IMR-90 (cell line): ENCODE measurements at regions of chr14 and their contacts with region 1.

Region 1: GRCh38 chr14:93115069-93115820 is 480 bp downstream of the ITPK1 start:
- DNase-seq: peak; percentile 78
- ATAC-seq: peak; percentile 92
- H3K4me3 ChIP-seq: peak overlapping the region; percentile 81
- H3K27ac ChIP-seq: peak overlapping the region; percentile 71; the same call in 1 of the 2 replicates
- H3K4me1 ChIP-seq: peaks cover 13% of the 10 kb centered on the region
- H3K27me3 ChIP-seq: no peaks in the 10 kb centered on the region
- CTCF ChIP-seq: no peak
- POLR2A ChIP-seq: no peak
- RAD21 ChIP-seq: no peak

Region 2: GRCh38 chr14:93033983-93034670 is 81.1 kb before region 1 on chr14:
- CTCF ChIA-PET with region 1: no interaction called
- POLR2A ChIA-PET with region 1: no interaction called
- dilution Hi-C with region 1: no loop called
- in situ Hi-C with region 1: no loop called
- intact Hi-C with region 1: loop called (anchors 5 kb)
- DNase-seq: no peak
- ATAC-seq: no peak
- H3K4me3 ChIP-seq: no peak overlapping the region
- H3K27ac ChIP-seq: no peak overlapping the region
- H3K4me1 ChIP-seq: peaks cover 20% of the 10 kb centered on the region
- H3K27me3 ChIP-seq: no peaks in the 10 kb centered on the region
- CTCF ChIP-seq: peak; percentile 34
- POLR2A ChIP-seq: no peak
- RAD21 ChIP-seq: peak; percentile 32; the same call in 1 of the 2 replicates

Region 3: GRCh38 chr14:93132470-93133065 is 17.3 kb after region 1 on chr14:
- CTCF ChIA-PET with region 1: interaction called, 20 read pairs
- POLR2A ChIA-PET with region 1: no interaction called
- dilution Hi-C with region 1: no loop called
- in situ Hi-C with region 1: no loop called
- intact Hi-C with region 1: no loop called
- DNase-seq: peak; percentile 22
- ATAC-seq: peak; percentile 56; the same call in 1 of the 2 replicates
- H3K4me3 ChIP-seq: no peak overlapping the region
- H3K27ac ChIP-seq: no peak overlapping the region
- H3K4me1 ChIP-seq: no peaks in the 10 kb centered on the region
- H3K27me3 ChIP-seq: peaks cover 12% of the 10 kb centered on the region
- CTCF ChIP-seq: peak; percentile 38
- POLR2A ChIP-seq: no peak
- RAD21 ChIP-seq: peak; percentile 36; the same call in 1 of the 2 replicates

Region 4: DNA sequence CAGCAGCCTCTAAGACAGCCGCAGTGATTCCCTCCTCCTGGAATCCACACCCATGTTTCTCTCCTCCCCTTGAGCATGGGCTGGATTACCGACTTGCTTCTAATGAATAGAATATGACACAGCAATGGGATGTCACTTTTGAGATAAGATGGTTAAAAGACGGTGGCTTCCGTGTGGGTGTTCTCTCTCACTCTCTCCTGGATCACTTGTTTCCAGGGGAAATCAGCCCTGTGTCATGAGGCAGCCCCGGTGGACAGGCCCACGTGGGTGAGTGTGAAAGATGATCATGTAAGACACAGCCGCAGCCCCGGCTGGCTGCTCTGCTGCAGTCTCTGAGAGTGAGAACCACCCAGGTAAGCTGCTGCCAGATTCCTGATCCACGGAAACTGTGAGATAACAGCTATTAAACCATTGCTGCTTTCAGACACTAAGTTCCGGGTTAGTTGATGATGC is 58.7 kb after region 1 on chr14:
- CTCF ChIA-PET with region 1: interaction called, 6 read pairs
- POLR2A ChIA-PET with region 1: no interaction called
- dilution Hi-C with region 1: no loop called
- in situ Hi-C with region 1: no loop called
- intact Hi-C with region 1: loop called (anchors 1 kb)
- DNase-seq: peak; percentile 22
- ATAC-seq: peak; percentile 42
- H3K4me3 ChIP-seq: no peak overlapping the region
- H3K27ac ChIP-seq: no peak overlapping the region
- H3K4me1 ChIP-seq: no peaks in the 10 kb centered on the region
- H3K27me3 ChIP-seq: peaks cover 9% of the 10 kb centered on the region
- CTCF ChIP-seq: no peak
- POLR2A ChIP-seq: no peak
- RAD21 ChIP-seq: no peak

Region 5: DNA sequence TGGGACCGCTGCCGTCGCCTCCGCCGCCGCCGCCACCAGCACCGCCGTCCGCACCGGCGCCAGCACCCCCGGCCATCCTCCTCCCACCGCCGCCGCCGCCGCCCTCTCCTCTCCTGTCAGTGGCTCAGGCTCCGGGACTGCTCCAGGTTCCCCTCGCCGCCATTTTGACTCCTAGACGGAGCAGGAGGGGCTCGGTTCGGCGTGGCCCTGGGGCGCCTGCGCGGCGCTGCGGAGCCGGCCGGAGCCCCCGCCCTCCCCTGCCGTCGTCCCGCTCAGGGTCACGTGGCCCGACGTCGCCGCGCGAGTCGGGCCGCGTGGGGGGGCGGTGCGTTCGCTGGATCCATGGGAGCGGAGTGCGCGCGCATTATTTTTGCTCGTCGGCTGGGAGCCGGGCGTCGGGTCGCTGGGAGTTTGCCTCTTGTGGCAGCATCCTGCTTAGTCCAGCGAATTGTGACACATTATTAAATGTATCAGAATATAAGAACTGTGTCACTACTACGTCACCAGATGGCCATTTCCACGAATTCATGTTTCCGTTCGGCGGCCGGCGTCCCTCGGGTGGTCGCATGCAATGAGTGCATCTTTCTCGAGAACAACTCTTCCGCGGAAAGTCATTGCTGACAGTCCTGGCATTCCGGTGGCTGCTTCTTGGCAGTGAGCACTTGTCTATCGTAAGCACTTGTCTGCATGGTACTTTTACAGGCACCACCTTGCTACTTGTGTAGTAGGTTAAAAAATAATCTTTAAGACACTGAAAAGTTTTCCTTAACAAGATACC is 217.8 kb after region 1 on chr14 and contains the start of gene BTBD7:
- CTCF ChIA-PET with region 1: no interaction called
- POLR2A ChIA-PET with region 1: no interaction called
- dilution Hi-C with region 1: no loop called
- in situ Hi-C with region 1: no loop called
- intact Hi-C with region 1: loop called (anchors 5 kb)
- DNase-seq: peak; percentile 92
- ATAC-seq: peak; percentile 96
- H3K4me3 ChIP-seq: peak within 1 kb of the TSS; percentile 55
- H3K27ac ChIP-seq: peak within 1 kb of the TSS; percentile 94
- H3K4me1 ChIP-seq: no peaks in the 10 kb centered on the region
- H3K27me3 ChIP-seq: no peaks in the 10 kb centered on the region
- CTCF ChIP-seq: peak; percentile 40; the same call in 1 of the 2 replicates
- POLR2A ChIP-seq: peak; percentile 80; the same call in 1 of the 2 replicates
- RAD21 ChIP-seq: peak; percentile 39; the same call in 1 of the 2 replicates
- total RNA-seq, gene BTBD7: 30.5 and 30.6 TPM in 2 replicates

Region 6: DNA sequence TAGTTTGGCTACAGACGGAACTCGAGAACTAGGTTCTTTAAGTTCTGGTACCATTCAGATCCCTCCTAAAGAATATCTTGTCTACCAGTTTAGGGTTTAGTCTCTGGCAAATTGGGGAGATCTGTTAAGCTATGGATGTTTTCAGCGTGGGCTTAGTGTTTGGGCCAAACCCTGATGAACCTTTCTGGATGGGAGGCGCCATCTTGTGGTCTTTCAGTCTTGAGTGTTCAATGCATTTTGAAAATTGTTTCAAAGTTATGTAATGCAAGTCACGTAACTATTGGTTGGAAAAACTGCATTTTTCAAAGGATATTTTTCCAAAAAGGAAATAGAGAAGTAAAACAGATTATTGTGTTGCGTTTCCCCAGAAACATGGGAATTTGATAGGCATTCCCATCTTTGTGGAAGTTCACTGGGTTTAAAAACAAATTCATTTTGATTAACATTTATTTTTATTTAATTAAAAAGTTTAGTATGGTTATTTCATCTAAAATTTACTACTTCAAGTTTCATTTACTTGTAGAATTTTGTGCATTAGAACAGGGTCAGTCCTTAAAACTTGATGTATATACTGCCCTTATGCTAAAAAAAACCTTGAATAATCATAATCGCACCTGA is 504.0 kb after region 1 on chr14:
- CTCF ChIA-PET with region 1: interaction called, 3 read pairs
- POLR2A ChIA-PET with region 1: no interaction called
- dilution Hi-C with region 1: no loop called
- in situ Hi-C with region 1: no loop called
- intact Hi-C with region 1: loop called (anchors 2 kb)
- DNase-seq: peak; percentile 50
- ATAC-seq: peak; percentile 68
- H3K4me3 ChIP-seq: no peak overlapping the region
- H3K27ac ChIP-seq: no peak overlapping the region
- H3K4me1 ChIP-seq: no peaks in the 10 kb centered on the region
- H3K27me3 ChIP-seq: no peaks in the 10 kb centered on the region
- CTCF ChIP-seq: peak; percentile 58
- POLR2A ChIP-seq: no peak
- RAD21 ChIP-seq: peak; percentile 60